HEK293 (cell line): ENCODE measurements at regions of chr2 and their contacts with region 1.

Region 1: DNA sequence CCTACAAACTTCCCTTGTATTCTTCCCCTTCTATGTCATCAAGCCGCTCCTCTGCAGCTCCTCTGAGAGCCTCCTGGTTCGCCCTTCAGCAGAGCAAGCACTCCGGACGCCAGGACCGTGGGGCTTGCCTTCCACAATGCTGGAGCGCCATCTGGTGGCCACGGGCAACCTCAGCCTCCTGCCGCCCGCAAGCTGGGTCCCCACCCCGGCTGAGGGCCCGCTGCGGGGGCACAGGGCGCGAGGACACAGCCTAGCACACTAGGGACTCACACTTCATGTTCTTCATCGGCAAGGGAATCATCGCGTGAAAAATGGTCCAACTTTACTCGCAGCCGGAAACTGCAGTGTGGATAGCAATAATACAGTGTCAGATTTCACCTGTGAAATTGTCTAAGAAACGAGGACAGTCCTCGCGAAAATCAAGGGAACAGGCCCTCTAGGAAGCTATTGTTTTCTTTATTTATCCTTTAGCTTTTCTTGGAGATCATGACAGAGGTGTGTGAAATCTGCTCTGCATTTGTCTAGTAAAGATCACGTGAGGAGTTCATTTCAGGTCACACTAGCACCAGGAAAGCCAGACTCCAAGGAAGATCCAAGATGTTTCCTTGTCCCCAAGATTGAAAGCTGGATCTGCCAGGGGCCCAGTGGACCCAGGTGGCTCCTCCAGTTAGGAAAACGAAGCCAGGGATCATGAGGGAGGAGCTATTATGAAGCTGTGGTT is 5.8 kb downstream of the PRLH start:
- H3K4me3 ChIP-seq: no peak overlapping the region
- H3K27ac ChIP-seq: no peak overlapping the region
- H3K4me1 ChIP-seq: 0 out of 2 replicates have a peak, but pooled peaks cover 3% of the 10 kb centered on the region
- CTCF ChIP-seq: peak; percentile 99

Region 2: DNA sequence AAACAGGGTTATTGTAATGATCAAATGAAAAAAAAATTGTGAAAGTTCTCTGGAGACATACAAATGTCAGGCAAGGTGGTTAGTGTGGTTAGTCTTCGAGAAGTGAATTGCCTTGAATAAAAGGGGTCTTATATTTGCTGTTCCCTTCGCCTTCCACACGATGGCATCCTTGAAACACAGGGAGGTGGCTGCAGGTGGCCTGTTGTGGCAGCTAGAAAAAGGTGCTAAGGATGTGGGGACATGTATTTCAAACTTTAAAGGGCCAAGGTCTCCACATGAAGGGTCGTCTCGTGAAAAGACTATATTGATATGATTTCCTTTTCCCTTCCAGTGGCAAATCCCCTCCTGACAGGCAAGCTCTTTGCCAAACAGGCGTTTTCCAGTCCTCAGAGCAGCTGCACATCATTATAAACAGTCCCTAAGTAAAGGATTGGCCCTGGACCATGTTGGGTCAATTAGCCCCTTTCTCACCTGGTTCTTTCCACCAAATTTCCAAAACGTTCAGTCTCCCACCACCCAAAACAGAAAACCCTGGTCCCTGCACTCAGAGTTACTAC is 418.0 kb before region 1 on chr2:
- CTCF ChIA-PET with region 1: interaction called, 27 read pairs
- POLR2A ChIA-PET with region 1: no interaction called
- H3K4me3 ChIP-seq: no peak overlapping the region
- H3K27ac ChIP-seq: no peak overlapping the region
- H3K4me1 ChIP-seq: no peaks in the 10 kb centered on the region
- CTCF ChIP-seq: peak; percentile 43; the same call in 1 of the 2 replicates

Region 3: GRCh38 chr2:237421542-237422116 is 150.6 kb before region 1 on chr2:
- CTCF ChIA-PET with region 1: interaction called, 32 read pairs
- POLR2A ChIA-PET with region 1: no interaction called
- H3K4me3 ChIP-seq: no peak overlapping the region; the same call in 1 of the 2 replicates
- H3K27ac ChIP-seq: no peak overlapping the region
- H3K4me1 ChIP-seq: peaks cover 5% of the 10 kb centered on the region
- CTCF ChIP-seq: peak; percentile 61

Region 4: DNA sequence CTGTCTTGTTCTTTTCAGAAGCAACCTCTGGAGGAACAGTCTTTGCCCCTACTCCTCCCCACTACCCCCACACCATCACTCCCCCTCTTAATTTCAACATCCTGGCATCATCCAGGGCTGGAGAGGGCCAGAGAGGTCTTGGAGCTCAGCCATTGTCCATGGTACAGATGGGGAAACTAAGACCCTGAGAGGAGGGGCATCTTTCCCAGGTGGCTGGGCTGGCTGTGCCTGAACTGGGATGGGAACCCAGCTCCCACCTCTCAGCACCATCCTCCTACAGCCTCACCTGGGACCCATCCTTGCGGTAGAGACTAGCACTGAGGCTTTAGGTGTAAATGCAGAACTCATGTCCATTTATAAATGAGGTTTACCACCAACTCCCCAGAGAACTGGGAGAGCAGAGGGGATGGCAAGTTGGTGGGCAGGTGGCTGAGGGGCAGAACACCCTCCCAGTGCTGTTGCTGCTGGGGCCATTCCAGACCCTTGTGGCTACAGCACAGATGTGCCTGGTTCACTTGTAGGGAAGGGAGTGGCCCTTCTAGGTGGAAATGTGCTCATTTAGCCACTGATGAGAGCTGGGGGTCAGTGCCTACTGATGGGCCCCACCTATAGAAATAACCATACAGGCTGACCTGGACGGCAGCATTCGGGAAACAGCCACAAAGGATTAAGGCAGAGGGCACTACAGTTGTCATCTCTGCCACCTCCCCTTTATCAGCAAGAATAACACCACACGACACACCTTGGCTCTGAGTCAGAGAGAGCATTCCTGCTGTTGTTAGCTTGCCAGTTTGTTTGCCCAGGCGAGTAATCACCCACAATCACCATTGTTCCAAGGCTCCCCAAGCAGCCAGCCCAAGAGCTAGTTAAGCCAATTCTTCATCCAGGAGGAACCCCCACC is 83.0 kb before region 1 on chr2:
- CTCF ChIA-PET with region 1: interaction called, 14 read pairs
- POLR2A ChIA-PET with region 1: no interaction called
- H3K4me3 ChIP-seq: no peak overlapping the region
- H3K27ac ChIP-seq: no peak overlapping the region
- H3K4me1 ChIP-seq: no peaks in the 10 kb centered on the region
- CTCF ChIP-seq: no peak

Region 5: GRCh38 chr2:237558906-237559641 is 13.1 kb before region 1 on chr2:
- CTCF ChIA-PET with region 1: interaction called, 30 read pairs
- POLR2A ChIA-PET with region 1: no interaction called
- H3K4me3 ChIP-seq: no peak overlapping the region
- H3K27ac ChIP-seq: no peak overlapping the region
- H3K4me1 ChIP-seq: no peaks in the 10 kb centered on the region
- CTCF ChIP-seq: no peak

Region 6: GRCh38 chr2:237782181-237782580 is 210.0 kb after region 1 on chr2:
- CTCF ChIA-PET with region 1: interaction called, 10 read pairs
- POLR2A ChIA-PET with region 1: no interaction called
- H3K4me3 ChIP-seq: no peak overlapping the region
- H3K27ac ChIP-seq: no peak overlapping the region
- H3K4me1 ChIP-seq: no peaks in the 10 kb centered on the region
- CTCF ChIP-seq: no peak

Region 7: DNA sequence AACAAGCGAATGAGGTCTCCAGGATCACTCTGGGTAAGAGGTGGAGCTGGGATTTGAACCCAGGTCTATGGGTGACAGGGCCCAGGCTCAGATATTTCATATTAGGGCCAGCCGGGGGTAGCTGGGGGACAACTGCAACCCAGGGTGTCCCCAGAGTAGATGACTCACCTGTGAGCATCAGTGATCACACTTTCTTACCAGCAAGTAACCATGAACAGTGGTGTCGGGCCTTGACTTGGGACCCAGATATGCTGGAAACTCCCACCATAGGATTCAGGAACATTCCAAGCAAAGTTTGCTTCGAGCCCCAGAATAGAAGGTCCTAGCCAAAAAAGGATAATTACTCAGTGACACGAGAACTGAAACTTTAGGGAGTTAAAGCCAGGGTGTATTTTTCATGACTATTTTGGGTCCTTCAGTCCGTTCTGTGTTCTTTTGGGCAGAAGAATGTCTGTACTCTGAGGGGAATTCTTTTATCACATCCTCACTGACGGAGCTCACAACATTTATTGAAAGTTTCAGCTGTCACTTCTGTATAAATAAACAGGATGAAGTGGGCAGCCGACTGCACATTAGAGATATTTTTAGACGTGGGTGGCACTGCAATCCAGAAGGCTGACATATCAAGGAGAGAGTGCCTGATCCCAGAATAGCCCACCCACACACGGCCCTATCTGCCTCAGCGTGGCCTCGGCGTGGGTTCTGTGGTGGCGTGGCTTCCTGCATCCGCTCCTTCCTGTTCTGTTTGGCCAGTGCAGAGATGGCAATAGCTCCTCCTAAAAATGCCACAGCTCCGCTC is 332.8 kb after region 1 on chr2:
- CTCF ChIA-PET with region 1: no interaction called
- POLR2A ChIA-PET with region 1: no interaction called
- H3K4me3 ChIP-seq: no peak overlapping the region
- H3K27ac ChIP-seq: no peak overlapping the region
- H3K4me1 ChIP-seq: no peaks in the 10 kb centered on the region
- CTCF ChIP-seq: no peak